Psoas muscle (tissue), 8 donors: ENCODE measurements at regions of chr14 and their contacts with region 1.

Region 1: DNA sequence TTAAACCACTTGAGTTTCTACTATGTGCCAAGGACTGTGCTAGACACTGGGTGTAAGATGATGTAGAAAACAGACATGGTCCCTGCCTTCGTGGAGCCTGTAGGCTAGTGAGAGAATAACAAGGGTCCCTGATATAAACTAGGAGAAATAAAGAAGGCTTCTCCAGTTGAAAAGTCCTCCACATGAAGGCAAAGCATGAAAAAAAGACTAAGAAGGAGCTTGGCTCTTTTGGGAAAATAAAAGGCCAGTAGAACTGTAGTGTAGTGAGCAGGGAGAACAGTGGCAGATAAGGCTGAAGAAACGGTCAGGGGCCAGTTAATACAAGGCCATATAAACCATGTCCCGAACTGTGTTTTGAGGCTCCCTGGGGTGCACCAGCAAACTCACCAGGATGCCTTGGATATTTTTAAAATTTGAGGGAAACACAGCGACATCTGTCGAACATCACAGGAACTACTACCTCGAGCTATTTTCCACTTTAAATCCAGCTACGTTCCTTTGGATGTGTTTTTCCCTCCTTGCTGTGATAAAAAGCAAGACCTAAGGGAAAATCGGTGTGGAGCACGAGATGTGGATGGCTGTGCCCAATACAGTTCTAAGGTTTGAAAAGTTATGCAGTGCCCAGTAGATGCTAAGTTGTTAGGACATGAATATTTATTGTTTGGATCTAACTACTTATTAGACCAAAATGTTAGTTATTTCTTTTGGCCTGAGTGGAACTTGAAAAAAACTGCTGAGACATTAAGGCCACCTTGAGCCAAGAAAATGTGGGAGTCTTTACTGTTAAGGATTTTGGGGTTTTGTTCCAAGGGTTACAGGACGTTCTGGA is 8.5 kb upstream of the CFL2 start:
- DNase-seq: no peak
- ATAC-seq: peak; percentile 62 to 90 (median 74)
- H3K4me3 ChIP-seq: no peak overlapping the region
- H3K27ac ChIP-seq: no peak overlapping the region
- H3K4me1 ChIP-seq: no peaks in the 10 kb centered on the region
- H3K27me3 ChIP-seq: no peaks in the 10 kb centered on the region
- CTCF ChIP-seq: peak; percentile 84

Region 2: GRCh38 chr14:34671716-34672115 is 51.2 kb before region 1 on chr14:
- intact Hi-C with region 1: loop called (anchors 1 kb)
- DNase-seq: no peak
- ATAC-seq: no peak
- H3K4me3 ChIP-seq: no peak overlapping the region
- H3K27ac ChIP-seq: no peak overlapping the region
- H3K4me1 ChIP-seq: peaks cover 4% of the 10 kb centered on the region
- H3K27me3 ChIP-seq: no peaks in the 10 kb centered on the region
- CTCF ChIP-seq: no peak

Region 3: GRCh38 chr14:34741840-34742239 is 18.9 kb after region 1 on chr14:
- intact Hi-C with region 1: no loop called
- DNase-seq: no peak
- ATAC-seq: no peak
- H3K4me3 ChIP-seq: no peak overlapping the region
- H3K27ac ChIP-seq: no peak overlapping the region
- H3K4me1 ChIP-seq: no peaks in the 10 kb centered on the region
- H3K27me3 ChIP-seq: no peaks in the 10 kb centered on the region
- CTCF ChIP-seq: no peak

Region 4: GRCh38 chr14:34931206-34931605 is 208.3 kb after region 1 on chr14:
- intact Hi-C with region 1: no loop called
- DNase-seq: no peak
- ATAC-seq: no peak
- H3K4me3 ChIP-seq: no peak overlapping the region
- H3K27ac ChIP-seq: no peak overlapping the region
- H3K4me1 ChIP-seq: peaks cover 4% of the 10 kb centered on the region
- H3K27me3 ChIP-seq: no peaks in the 10 kb centered on the region
- CTCF ChIP-seq: no peak

Region 5: DNA sequence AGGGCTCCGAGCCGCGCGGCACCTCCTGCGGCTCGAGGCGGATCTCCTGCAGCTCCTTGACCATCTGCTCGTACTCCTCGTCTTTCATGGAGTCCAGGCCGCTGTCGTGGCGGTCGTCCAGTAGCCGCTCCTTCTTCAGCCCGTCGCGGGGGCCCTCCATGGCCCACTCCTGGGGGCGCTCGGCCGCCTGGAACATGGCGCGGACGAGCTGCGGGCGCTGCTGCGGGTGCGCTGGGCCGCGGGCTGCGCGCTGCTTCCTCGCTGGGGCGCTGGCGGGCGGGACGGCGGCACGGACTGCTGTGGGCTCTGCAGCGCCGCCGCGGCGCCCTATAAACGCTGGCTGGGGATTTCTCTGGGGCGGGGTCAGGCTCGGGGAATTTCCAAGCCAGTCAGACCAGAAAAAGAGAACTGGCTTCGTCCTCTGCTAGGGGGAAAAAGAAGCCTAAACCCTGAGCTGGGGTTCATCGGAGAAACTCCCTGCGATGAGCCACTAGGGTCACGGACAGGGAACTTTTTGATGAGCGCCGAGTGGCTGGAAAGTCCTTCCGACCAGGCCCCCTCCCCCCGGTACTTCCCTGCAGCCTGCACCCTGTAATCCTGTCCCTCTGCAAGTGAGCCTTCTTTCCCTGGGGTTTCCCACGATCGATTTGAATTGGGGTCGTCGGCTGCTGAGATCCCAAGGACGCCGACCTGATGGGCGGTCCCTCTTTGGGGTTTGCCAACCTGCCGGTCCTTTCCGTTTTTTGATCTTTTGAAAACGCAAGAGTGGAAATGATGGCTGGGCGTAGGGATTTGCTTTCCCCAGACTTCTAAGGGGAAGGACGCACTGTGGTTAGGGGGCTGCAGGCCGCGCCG is 681.7 kb after region 1 on chr14 and contains the start of gene NFKBIA:
- intact Hi-C with region 1: no loop called
- DNase-seq: peak; percentile 92 to 97
- ATAC-seq: peak; percentile 61 to 76 (median 62)
- H3K4me3 ChIP-seq: peak within 1 kb of the TSS; percentile 98
- H3K27ac ChIP-seq: peak within 1 kb of the TSS; percentile 100
- H3K4me1 ChIP-seq: peaks cover 36% of the 10 kb centered on the region
- H3K27me3 ChIP-seq: no peaks in the 10 kb centered on the region
- CTCF ChIP-seq: peak; percentile 26
- total RNA-seq, gene NFKBIA: 48.7 to 144 (median 96.4) TPM